Lower lobe of right lung (tissue), 2 donors: ENCODE measurements at regions of chr7 and their contacts with region 1.

Region 1: DNA sequence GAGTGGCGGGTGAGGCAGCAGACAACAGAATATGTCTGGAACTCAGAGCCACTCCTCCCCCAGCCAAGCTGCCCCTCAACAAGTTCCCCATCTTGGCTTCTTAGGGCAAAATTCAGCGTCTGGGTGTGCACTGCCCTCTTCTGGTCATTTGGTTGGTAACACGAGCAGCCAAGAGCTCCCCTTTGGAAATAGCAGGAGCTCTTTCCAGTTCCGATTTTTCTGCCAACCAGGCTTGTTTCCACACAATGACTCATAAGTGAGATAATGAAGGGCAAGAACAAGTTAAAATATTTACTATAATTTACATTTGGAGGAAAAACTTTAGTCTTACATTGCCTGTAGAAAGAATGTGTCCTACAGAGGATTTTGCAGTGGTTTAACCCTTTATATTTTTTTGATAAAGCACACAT is 70.5 kb downstream of the ADCYAP1R1 start:
- DNase-seq: peak; percentile 59
- ATAC-seq: peak; percentile 86 to 89
- H3K4me3 ChIP-seq: no peak overlapping the region
- H3K27ac ChIP-seq: no peak overlapping the region
- H3K4me1 ChIP-seq: no peaks in the 10 kb centered on the region
- H3K27me3 ChIP-seq: peaks cover 5% of the 10 kb centered on the region
- CTCF ChIP-seq: peak; percentile 89

Region 2: GRCh38 chr7:30799206-30799975 is 323.3 kb before region 1 on chr7:
- intact Hi-C with region 1: loop called (anchors 5 kb)
- DNase-seq: no peak
- ATAC-seq: no peak
- H3K4me3 ChIP-seq: no peak overlapping the region
- H3K27ac ChIP-seq: no peak overlapping the region
- H3K4me1 ChIP-seq: peaks cover 45% of the 10 kb centered on the region
- H3K27me3 ChIP-seq: no peaks in the 10 kb centered on the region
- CTCF ChIP-seq: no peak

Region 3: GRCh38 chr7:30983042-30983913 is 139.4 kb before region 1 on chr7:
- intact Hi-C with region 1: loop called (anchors 5 kb)
- DNase-seq: peak; percentile 84
- ATAC-seq: peak; percentile 87 to 88
- H3K4me3 ChIP-seq: no peak overlapping the region
- H3K27ac ChIP-seq: no peak overlapping the region
- H3K4me1 ChIP-seq: peaks cover 2% of the 10 kb centered on the region
- H3K27me3 ChIP-seq: no peaks in the 10 kb centered on the region
- CTCF ChIP-seq: peak; percentile 97